ENCODE measurements at regions of chr12 and their contacts with region 1.

Region 1: DNA sequence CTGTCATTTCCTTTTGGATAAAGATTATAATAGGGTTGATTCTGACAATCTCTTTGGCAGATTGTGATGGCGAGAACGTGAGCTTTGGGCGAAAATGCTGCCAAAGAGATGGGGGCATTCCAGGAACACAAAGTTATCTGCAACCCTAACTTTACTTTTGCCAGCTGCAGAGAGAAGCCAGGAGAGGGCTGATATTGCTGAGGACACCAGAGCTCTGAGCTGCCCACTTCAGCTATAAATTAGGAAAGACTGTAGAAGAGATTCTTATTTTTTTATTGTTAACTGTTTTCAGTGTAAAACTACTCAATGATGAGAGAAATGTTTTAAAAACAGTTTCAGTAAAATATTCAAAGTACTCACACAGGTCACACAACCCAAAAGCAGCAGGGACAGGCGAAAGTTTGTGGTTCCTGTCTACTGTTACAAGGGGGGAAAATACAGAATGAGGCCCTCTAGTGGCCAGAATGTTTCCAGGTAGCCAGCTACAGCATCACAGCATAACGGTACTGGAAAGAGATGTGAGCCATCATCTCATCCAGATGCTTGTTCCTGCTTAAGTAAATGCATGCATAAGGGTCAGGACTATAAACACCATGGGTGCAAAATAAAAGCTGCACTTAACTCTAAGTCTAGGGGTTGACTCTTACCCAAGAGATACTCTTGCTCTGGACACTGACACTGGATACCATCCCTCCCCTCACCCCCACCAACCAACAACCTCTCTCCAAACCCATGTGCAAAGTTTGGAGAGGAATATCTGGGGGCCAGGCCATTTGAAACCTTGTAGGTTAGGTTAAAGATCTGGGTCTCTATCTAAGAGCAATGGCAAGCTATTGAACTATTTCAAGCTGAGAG is 498.4 kb downstream of the RMST start:
- DNase-seq: peak in 1 of 2 experiments; percentile 64
- H3K4me3 ChIP-seq: no peak overlapping the region
- H3K27ac ChIP-seq: no peak overlapping the region
- H3K4me1 ChIP-seq: no peaks in the 10 kb centered on the region; a peak in 1 of 7 replicates
- H3K27me3 ChIP-seq: no peaks in the 10 kb centered on the region
- CTCF ChIP-seq: peak; percentile 30 to 94 (median 81)
- EP300 ChIP-seq: no peak
- POLR2A ChIP-seq: no peak
- RAD21 ChIP-seq: peak; percentile 74 to 81

Region 2: DNA sequence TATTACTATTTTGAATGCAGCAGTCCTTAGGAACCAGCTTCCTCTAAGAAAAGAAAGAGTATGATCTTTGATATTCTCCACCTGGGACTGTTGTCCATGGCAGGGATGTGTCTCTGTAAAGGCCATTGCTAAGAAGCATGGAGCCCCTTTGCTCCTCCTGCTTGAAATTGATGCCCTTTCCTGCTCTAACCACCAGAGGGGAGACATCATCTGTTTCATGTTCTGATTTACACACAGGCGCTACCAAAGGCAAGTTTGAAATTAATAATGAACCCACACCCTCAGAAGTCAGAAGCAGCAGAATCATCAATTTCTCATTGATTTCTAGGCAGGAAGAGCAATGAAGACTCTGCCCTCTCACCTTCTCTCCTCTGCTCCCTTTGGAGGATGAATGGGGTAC is 244.6 kb before region 1 on chr12:
- CTCF ChIA-PET with region 1: interaction called, 62 read pairs
- POLR2A ChIA-PET with region 1: no interaction called
- DNase-seq: peak in 1 of 2 experiments; percentile 13
- H3K4me3 ChIP-seq: no peak overlapping the region
- H3K27ac ChIP-seq: no peak overlapping the region
- H3K4me1 ChIP-seq: peaks cover 2 to 7% (median 3%) of the 10 kb centered on the region in 4 experiments; a peak in 6 of 7 replicates
- H3K27me3 ChIP-seq: no peaks in the 10 kb centered on the region
- CTCF ChIP-seq: peak in 2 of 3 experiments; percentile 62 to 69; a peak in 3 of 4 replicates
- EP300 ChIP-seq: no peak
- POLR2A ChIP-seq: no peak
- RAD21 ChIP-seq: peak; percentile 82 to 88

Region 3: GRCh38 chr12:97899956-97900355 is 61.0 kb before region 1 on chr12:
- CTCF ChIA-PET with region 1: no interaction called
- POLR2A ChIA-PET with region 1: no interaction called
- DNase-seq: no peak
- H3K4me3 ChIP-seq: no peak overlapping the region
- H3K27ac ChIP-seq: no peak overlapping the region
- H3K4me1 ChIP-seq: 0 out of 7 replicates have a peak, but pooled peaks cover 0 to 2% (median 0%) of the 10 kb centered on the region in 4 experiments
- H3K27me3 ChIP-seq: no peaks in the 10 kb centered on the region
- CTCF ChIP-seq: no peak
- EP300 ChIP-seq: no peak
- POLR2A ChIP-seq: no peak
- RAD21 ChIP-seq: no peak

Region 4: GRCh38 chr12:97977870-97978405 is 17.0 kb after region 1 on chr12:
- CTCF ChIA-PET with region 1: interaction called, 102 read pairs
- POLR2A ChIA-PET with region 1: no interaction called
- DNase-seq: no peak
- H3K4me3 ChIP-seq: no peak overlapping the region
- H3K27ac ChIP-seq: no peak overlapping the region
- H3K4me1 ChIP-seq: no peaks in the 10 kb centered on the region
- H3K27me3 ChIP-seq: peaks cover 0 to 1% (median 0%) of the 10 kb centered on the region in 4 experiments; a peak in 1 of 7 replicates
- CTCF ChIP-seq: no peak
- EP300 ChIP-seq: no peak
- POLR2A ChIP-seq: no peak
- RAD21 ChIP-seq: no peak

Region 5: GRCh38 chr12:98002712-98003493 is 41.9 kb after region 1 on chr12:
- CTCF ChIA-PET with region 1: interaction called, 27 read pairs
- POLR2A ChIA-PET with region 1: no interaction called
- DNase-seq: peak; percentile 13 to 75
- H3K4me3 ChIP-seq: no peak overlapping the region
- H3K27ac ChIP-seq: no peak overlapping the region
- H3K4me1 ChIP-seq: no peaks in the 10 kb centered on the region
- H3K27me3 ChIP-seq: no peaks in the 10 kb centered on the region
- CTCF ChIP-seq: peak in 2 of 3 experiments; percentile 66 to 77; a peak in 3 of 4 replicates
- EP300 ChIP-seq: no peak
- POLR2A ChIP-seq: no peak
- RAD21 ChIP-seq: peak; percentile 74 to 77

Region 6: DNA sequence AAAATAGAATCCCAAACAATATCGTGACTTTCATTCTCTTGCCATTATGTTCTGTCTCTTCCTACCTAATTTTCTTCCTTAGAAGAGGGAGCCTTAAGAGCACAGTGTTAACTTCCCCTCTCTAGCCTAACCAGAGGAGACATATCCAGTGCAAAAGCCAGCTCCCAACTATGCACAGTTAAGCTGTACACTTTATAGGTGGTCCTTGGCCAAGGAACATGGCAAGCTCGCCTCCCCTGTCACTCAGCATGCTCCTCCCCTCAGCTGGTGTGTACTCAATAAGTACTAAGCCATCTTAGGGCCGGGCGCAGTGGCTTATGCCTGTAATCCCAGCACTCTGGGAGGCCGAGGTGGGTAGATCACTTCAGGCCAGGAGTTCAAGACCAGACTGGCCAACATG is 299.3 kb after region 1 on chr12:
- CTCF ChIA-PET with region 1: no interaction called
- POLR2A ChIA-PET with region 1: no interaction called
- DNase-seq: no peak
- H3K4me3 ChIP-seq: no peak overlapping the region
- H3K27ac ChIP-seq: no peak overlapping the region
- H3K4me1 ChIP-seq: no peaks in the 10 kb centered on the region
- H3K27me3 ChIP-seq: no peaks in the 10 kb centered on the region
- CTCF ChIP-seq: no peak
- EP300 ChIP-seq: no peak
- POLR2A ChIP-seq: no peak
- RAD21 ChIP-seq: no peak

Region 7: GRCh38 chr12:98296462-98297079 is 335.6 kb after region 1 on chr12:
- CTCF ChIA-PET with region 1: no interaction called
- POLR2A ChIA-PET with region 1: no interaction called
- DNase-seq: peak in 1 of 2 experiments; percentile 60
- H3K4me3 ChIP-seq: no peak overlapping the region
- H3K27ac ChIP-seq: no peak overlapping the region
- H3K4me1 ChIP-seq: peaks cover 0 to 3% (median 0%) of the 10 kb centered on the region in 4 experiments; a peak in 3 of 7 replicates
- H3K27me3 ChIP-seq: no peaks in the 10 kb centered on the region
- CTCF ChIP-seq: no peak
- EP300 ChIP-seq: no peak
- POLR2A ChIP-seq: no peak
- RAD21 ChIP-seq: no peak

Region 8: GRCh38 chr12:98397316-98398105 is 436.5 kb after region 1 on chr12:
- CTCF ChIA-PET with region 1: interaction called, 14 read pairs
- POLR2A ChIA-PET with region 1: no interaction called
- DNase-seq: peak; percentile 64 to 91
- H3K4me3 ChIP-seq: peak overlapping the region; percentile 24 to 59 (median 34); a peak in 7 of 8 replicates
- H3K27ac ChIP-seq: no peak overlapping the region
- H3K4me1 ChIP-seq: peaks cover 0 to 10% (median 7%) of the 10 kb centered on the region in 4 experiments; a peak in 5 of 7 replicates
- H3K27me3 ChIP-seq: no peaks in the 10 kb centered on the region
- CTCF ChIP-seq: peak; percentile 85 to 88 (median 86)
- EP300 ChIP-seq: no peak
- POLR2A ChIP-seq: no peak
- RAD21 ChIP-seq: peak; percentile 91 to 93

Measured in H1 (cell line).